Spleen (tissue), 13 donors: ENCODE measurements at regions of chr7 and their contacts with region 1.

Region 1: DNA sequence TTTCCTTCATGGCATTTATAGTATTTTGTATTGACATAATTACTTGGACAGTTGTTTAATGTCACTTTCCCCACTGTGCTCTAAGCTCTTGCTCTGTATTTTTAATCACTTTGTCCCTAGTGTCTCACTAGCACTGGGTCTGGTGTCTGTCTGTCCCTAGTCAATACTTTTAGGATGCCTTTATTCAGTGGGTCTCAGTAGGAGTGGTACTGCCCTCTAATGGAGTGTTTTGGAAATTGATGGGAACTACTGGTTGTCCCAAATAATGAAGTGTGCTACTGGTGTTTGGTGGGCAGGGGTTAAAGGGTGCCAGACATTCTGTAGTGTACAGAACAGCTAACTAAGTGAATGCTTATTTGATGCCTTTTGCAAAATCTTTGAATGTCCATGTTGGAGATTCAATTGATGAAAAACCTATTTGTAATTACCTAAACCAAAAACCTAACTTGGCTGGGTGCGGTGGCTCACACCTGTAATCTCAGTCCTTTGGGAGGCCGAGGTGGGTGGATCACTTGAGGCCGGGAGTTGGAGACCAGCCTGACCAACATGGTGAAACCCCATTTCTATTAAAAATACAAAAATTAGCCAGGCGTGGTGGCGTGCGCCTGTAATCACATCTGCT is 33.3 kb downstream of the CDK14 start:
- DNase-seq: no peak
- H3K4me3 ChIP-seq: no peak overlapping the region
- H3K27ac ChIP-seq: no peak overlapping the region
- H3K4me1 ChIP-seq: peaks cover 0 to 18% (median under 1%) of the 10 kb centered on the region in 6 donors
- H3K27me3 ChIP-seq: no peaks in the 10 kb centered on the region
- CTCF ChIP-seq: peak; percentile 27 to 79 (median 67)
- POLR2A ChIP-seq: no peak

Region 2: DNA sequence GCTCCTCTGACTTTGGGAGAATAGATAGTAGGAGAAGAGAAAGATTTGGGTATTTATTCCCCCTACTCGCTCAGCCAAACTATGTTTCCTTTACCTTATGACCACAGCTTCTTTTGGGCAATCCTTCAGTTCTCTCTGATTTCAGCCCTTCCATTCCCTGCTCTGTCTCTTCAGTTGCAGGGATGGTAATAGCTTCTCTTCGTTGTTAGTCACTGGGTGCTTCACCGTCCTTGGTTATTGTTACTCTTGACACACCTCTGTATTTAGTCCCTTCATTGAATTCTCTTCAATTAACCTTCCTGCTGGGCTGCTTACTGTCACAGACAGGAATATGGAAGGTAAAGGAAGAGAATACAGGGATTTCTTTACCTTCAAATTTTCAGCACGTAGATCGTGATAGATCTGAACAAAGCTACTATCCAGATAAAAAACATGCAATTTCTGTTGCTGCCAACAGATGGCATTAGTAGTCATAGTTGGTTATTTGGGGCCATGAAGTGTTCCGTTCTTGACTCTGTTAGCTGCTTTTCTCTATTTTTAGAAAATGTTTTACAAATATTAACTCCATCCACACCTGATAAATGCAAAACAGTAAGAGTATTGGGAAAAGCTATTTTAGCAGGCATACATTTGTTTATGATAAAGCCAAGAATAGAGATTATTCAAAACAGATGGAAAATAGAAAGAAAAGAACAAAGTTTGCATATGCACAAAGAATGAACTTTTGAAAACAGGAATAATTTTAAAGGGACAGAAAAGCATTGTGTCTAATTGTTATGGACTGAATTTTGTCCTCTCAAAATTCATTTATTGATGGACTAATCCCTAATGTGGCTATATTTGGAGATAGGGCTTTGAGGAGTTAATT is 174.0 kb before region 1 on chr7:
- intact Hi-C with region 1: loop called (anchors 10 kb)
- DNase-seq: no peak
- H3K4me3 ChIP-seq: peak overlapping the region in 1 of 8 donors; percentile 11
- H3K27ac ChIP-seq: no peak overlapping the region
- H3K4me1 ChIP-seq: peaks cover 0 to 11% (median 8%) of the 10 kb centered on the region in 6 donors
- H3K27me3 ChIP-seq: peaks cover 0 to 6% (median 0%) of the 10 kb centered on the region in 7 donors
- CTCF ChIP-seq: peak; percentile 23 to 71 (median 59)
- POLR2A ChIP-seq: no peak

Region 3: DNA sequence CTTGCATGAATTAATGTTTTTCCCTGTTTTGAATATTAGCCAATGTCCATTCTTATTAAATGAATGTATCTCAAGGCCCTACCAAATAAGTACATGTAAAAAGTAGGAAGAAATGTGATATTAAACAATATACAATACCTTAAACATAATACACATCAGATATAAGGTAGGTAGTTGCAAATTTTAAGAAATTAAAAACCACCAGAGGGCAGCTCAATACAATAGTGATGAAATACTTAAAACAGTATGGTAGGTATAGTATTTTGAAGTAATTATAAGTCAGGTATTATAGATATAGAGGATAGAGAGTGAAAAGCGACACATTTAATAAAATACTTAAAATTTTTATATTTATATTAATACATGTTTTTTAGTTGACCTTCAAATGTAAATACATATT is 76.9 kb before region 1 on chr7:
- intact Hi-C with region 1: loop called (anchors 5 kb)
- DNase-seq: no peak
- H3K4me3 ChIP-seq: no peak overlapping the region
- H3K27ac ChIP-seq: no peak overlapping the region
- H3K4me1 ChIP-seq: no peaks in the 10 kb centered on the region
- H3K27me3 ChIP-seq: no peaks in the 10 kb centered on the region
- CTCF ChIP-seq: peak in 5 of 11 experiments; percentile 10 to 35 (median 23)
- POLR2A ChIP-seq: no peak